ENCODE measurements at regions of chr4 and their contacts with region 1.

Region 1: DNA sequence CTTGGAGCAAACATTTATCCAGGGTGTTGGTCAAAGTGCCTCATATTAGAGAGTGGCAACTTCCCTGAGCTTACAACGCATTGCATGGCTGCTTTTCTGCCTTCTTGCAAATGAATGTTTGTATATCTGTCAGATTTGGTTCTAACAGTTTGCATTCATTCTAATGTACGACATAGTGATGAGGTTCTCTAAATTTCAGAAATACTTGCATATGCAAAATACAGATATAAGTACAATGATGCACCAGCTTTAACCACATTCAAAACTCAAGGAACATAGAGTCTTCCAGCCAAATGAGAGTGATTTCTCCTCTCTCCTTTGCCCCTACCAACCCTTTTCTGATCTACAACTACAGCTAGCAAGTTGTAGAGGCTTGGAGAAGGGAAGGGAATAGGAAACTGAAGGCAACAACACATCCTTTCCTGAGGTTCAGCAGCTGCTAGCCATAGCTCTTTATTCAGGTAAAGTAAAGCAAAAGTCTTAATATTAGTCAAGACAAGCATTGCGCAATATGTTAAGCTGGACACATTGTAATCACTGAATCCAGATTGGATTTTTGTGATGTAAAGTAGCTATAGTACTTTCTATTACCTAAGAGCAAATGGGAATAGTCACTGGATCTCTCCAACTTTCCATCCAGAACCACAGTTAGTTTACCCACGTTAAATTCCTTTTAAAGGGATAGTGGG is 6.3 kb downstream of the TKTL2 start:
- DNase-seq: no peak
- H3K4me3 ChIP-seq: no peak overlapping the region
- H3K27ac ChIP-seq: no peak overlapping the region
- H3K4me1 ChIP-seq: no peaks in the 10 kb centered on the region
- H3K27me3 ChIP-seq: no peaks in the 10 kb centered on the region
- CTCF ChIP-seq: no peak
- EP300 ChIP-seq: no peak
- POLR2A ChIP-seq: no peak

Region 2: GRCh38 chr4:163048447-163048846 is 418.8 kb before region 1 on chr4:
- in situ Hi-C with region 1: no loop called
- intact Hi-C with region 1: no loop called
- DNase-seq: peak; percentile 13
- H3K4me3 ChIP-seq: no peak overlapping the region
- H3K27ac ChIP-seq: no peak overlapping the region
- H3K4me1 ChIP-seq: no peaks in the 10 kb centered on the region
- H3K27me3 ChIP-seq: no peaks in the 10 kb centered on the region
- CTCF ChIP-seq: peak; percentile 19 to 47 (median 38)
- EP300 ChIP-seq: no peak
- POLR2A ChIP-seq: no peak

Region 3: DNA sequence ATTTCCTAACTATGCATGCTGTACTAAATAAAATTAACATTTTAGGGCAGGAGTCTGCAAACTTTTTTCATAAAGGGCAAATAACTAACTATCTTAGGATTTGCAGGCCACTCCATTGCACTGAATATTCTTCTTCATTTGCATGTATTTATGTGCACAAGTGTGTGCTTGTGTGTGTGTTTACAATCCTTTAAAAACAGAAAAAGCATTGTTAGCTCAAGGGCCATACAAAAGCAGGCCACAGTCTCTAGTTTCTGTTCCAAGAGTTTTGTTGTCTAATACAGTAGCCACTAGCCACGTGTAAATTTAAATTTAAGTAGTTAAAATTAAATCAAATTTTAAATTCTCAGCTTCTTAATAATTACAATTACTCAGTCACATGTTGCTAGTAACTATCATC is 649.1 kb after region 1 on chr4:
- in situ Hi-C with region 1: no loop called
- intact Hi-C with region 1: loop called (anchors 5 kb)
- DNase-seq: no peak
- H3K4me3 ChIP-seq: no peak overlapping the region
- H3K27ac ChIP-seq: no peak overlapping the region
- H3K4me1 ChIP-seq: no peaks in the 10 kb centered on the region
- H3K27me3 ChIP-seq: no peaks in the 10 kb centered on the region
- CTCF ChIP-seq: no peak
- EP300 ChIP-seq: no peak
- POLR2A ChIP-seq: no peak